ENCODE measurements at regions of chr18 and their contacts with region 1.

Region 1: DNA sequence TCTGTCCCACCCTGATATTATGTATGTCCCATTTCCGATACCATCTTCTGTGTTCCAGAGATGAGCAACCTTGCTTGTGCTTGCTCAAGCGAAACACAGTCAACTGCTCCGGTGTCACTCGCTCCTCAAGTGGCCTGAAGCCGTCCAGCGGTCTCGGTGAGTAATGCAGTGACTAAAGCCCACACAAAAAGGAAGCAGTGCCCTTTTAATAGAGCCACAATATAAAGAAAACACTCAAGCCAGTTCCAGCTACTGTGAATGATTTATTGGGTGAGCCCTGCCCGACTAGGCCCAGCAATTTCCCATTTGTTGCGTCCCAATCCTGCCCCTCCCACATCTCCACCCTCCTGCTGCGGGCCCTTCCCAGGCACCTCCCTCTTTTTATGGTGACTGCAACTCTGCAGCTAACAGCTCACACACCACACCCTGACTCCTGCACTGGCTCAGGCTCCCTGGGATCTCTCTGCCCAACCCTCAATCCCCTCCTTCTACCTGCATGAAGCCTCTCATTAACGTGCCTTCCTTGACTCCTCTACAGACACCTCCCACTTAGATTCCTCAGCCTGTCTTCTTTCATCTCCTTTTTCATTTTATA is 44.2 kb upstream of the DSC1 start:
- DNase-seq: peak in 1 of 2 donors; percentile 14
- ATAC-seq: no peak
- H3K4me3 ChIP-seq: no peak overlapping the region
- H3K27ac ChIP-seq: no peak overlapping the region
- H3K4me1 ChIP-seq: no peaks in the 10 kb centered on the region
- H3K27me3 ChIP-seq: no peaks in the 10 kb centered on the region
- CTCF ChIP-seq: no peak
- POLR2A ChIP-seq: no peak

Region 2: GRCh38 chr18:31301201-31301655 is 94.3 kb after region 1 on chr18:
- in situ Hi-C with region 1: loop called in 1 of 4 experiments (anchors 25 kb)
- intact Hi-C with region 1: no loop called
- DNase-seq: no peak
- ATAC-seq: no peak
- H3K4me3 ChIP-seq: no peak overlapping the region
- H3K27ac ChIP-seq: no peak overlapping the region
- H3K4me1 ChIP-seq: no peaks in the 10 kb centered on the region
- H3K27me3 ChIP-seq: no peaks in the 10 kb centered on the region
- CTCF ChIP-seq: no peak
- POLR2A ChIP-seq: no peak

Region 3: GRCh38 chr18:32372381-32373061 is 1165.6 kb after region 1 on chr18:
- in situ Hi-C with region 1: no loop called
- intact Hi-C with region 1: no loop called
- DNase-seq: no peak
- ATAC-seq: no peak
- H3K4me3 ChIP-seq: no peak overlapping the region
- H3K27ac ChIP-seq: peak overlapping the region in 1 of 4 donors; percentile 15
- H3K4me1 ChIP-seq: peaks cover 20 to 34% of the 10 kb centered on the region in 2 donors
- H3K27me3 ChIP-seq: no peaks in the 10 kb centered on the region
- CTCF ChIP-seq: no peak
- POLR2A ChIP-seq: no peak